MCF 10A (cell line): ENCODE measurements at regions of chr7 and their contacts with region 1.

Region 1: GRCh38 chr7:74289018-74289658 is at the start of gene CLIP2:
- DNase-seq: peak; percentile 72
- H3K4me3 Mint-ChIP-seq: peak within 1 kb of the TSS; percentile 70
- H3K27ac Mint-ChIP-seq: no peak within 1 kb of the TSS
- H3K4me1 Mint-ChIP-seq: peaks cover 15% of the 10 kb centered on the region
- H3K27me3 Mint-ChIP-seq: no peaks in the 10 kb centered on the region
- CTCF ChIP-seq: no peak
- total RNA-seq, gene CLIP2: 13.7 and 14.2 TPM in 2 replicates

Region 2: GRCh38 chr7:74272305-74273038 is 16.7 kb before region 1 on chr7:
- CTCF ChIA-PET with region 1: interaction called, 5 read pairs
- POLR2A ChIA-PET with region 1: interaction called, 29 read pairs
- intact Hi-C with region 1: loop called (anchors 1 kb)
- DNase-seq: peak; percentile 71
- H3K4me3 Mint-ChIP-seq: no peak overlapping the region
- H3K27ac Mint-ChIP-seq: peak overlapping the region; percentile 90
- H3K4me1 Mint-ChIP-seq: peaks cover 14% of the 10 kb centered on the region
- H3K27me3 Mint-ChIP-seq: no peaks in the 10 kb centered on the region
- CTCF ChIP-seq: no peak

Region 3: DNA sequence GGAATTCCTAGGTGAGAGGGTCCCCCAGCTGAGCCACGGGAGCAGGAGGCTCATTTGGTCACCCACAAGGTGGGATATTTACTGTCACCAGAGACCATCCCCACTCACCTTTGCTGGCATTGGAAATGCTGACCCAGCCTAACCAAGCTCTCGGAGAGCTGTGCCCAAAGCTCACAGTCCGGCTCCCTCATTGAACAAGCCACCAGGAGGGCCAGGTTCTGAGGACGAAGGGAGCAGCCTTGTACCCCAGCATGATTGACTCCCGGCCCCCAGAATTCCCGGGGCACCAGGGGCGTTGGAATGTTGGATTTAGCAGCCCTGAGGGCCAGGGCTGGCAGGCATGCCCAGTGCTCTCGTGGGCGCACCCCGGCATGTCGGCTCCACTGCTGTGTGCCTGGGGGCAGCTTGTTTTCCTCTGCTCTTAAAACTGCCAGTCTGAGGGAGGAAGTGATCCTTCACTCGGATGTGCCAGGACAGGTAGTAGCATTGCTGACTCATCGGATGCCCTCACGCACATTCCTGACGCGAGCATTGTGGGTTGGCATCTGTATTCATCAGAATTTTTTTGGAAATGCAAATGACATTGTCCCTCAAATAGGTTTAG is 23.4 kb after region 1 on chr7:
- CTCF ChIA-PET with region 1: interaction called, 3 read pairs
- POLR2A ChIA-PET with region 1: interaction called, 11 read pairs
- intact Hi-C with region 1: no loop called
- DNase-seq: peak; percentile 94
- H3K4me3 Mint-ChIP-seq: peak overlapping the region; percentile 33
- H3K27ac Mint-ChIP-seq: peak overlapping the region; percentile 71
- H3K4me1 Mint-ChIP-seq: peaks cover 12% of the 10 kb centered on the region
- H3K27me3 Mint-ChIP-seq: no peaks in the 10 kb centered on the region
- CTCF ChIP-seq: no peak

Region 4: GRCh38 chr7:74395745-74396311 is 106.7 kb after region 1 on chr7:
- CTCF ChIA-PET with region 1: interaction called, 27 read pairs
- POLR2A ChIA-PET with region 1: interaction called, 4 read pairs
- intact Hi-C with region 1: loop called (anchors 2 kb)
- DNase-seq: no peak
- H3K4me3 Mint-ChIP-seq: no peak overlapping the region
- H3K27ac Mint-ChIP-seq: no peak overlapping the region
- H3K4me1 Mint-ChIP-seq: peaks cover 12% of the 10 kb centered on the region
- H3K27me3 Mint-ChIP-seq: no peaks in the 10 kb centered on the region
- CTCF ChIP-seq: no peak